HCT116 (cell line): ENCODE measurements at regions of chr13 and their contacts with region 1.

Region 1: DNA sequence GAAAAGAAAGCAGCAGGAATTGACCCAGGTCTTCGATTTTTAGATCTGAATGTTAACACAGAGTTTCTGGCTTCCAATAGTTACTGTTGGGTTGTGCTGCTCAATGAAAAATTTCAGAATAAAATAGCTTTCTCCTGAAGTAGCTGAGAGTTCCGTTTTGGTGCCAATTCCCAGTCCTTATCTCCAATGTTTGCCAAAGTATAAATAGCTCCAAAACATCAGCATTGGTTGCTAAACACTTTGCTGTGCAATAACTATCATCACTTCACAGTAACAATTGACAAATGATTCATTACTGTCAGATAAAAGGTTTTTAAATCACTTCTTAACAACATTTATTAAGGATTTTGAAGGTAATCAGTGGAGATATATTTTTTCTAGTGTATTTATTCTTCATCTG is 446.0 kb downstream of the PCDH20 start:
- DNase-seq: no peak
- ATAC-seq: no peak
- H3K4me3 ChIP-seq: no peak overlapping the region
- H3K27ac ChIP-seq: no peak overlapping the region
- H3K4me1 ChIP-seq: no peaks in the 10 kb centered on the region
- H3K27me3 ChIP-seq: no peaks in the 10 kb centered on the region
- CTCF ChIP-seq: no peak
- POLR2A ChIP-seq: no peak
- RAD21 ChIP-seq: no peak

Region 2: GRCh38 chr13:61045251-61045650 is 75.6 kb after region 1 on chr13:
- CTCF ChIA-PET with region 1: no interaction called
- POLR2A ChIA-PET with region 1: no interaction called
- RAD21 ChIA-PET with region 1: no interaction called
- intact Hi-C with region 1: no loop called
- DNase-seq: no peak
- ATAC-seq: no peak
- H3K4me3 ChIP-seq: no peak overlapping the region
- H3K27ac ChIP-seq: no peak overlapping the region
- H3K4me1 ChIP-seq: no peaks in the 10 kb centered on the region
- H3K27me3 ChIP-seq: no peaks in the 10 kb centered on the region
- CTCF ChIP-seq: no peak
- POLR2A ChIP-seq: no peak
- RAD21 ChIP-seq: no peak

Region 3: DNA sequence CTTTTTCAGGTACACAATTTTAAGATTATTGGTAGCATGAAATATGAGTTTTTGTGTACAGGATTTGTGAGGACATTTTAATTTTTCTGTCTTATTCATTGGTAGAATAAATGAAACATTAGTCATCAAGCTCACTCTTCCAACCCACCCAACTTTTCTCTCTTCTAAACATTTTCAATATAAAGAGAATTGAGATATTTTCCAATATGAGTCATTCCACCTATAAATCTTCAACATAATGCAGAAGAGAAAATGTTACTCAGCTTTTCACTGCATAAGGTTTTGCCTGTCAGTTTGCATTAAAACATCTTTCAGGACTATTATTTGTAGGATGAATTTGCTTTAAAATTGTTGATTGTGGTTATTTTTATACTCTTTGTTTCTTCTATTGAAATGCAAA is 115.3 kb after region 1 on chr13:
- CTCF ChIA-PET with region 1: no interaction called
- POLR2A ChIA-PET with region 1: no interaction called
- RAD21 ChIA-PET with region 1: no interaction called
- intact Hi-C with region 1: no loop called
- DNase-seq: no peak
- ATAC-seq: no peak
- H3K4me3 ChIP-seq: no peak overlapping the region
- H3K27ac ChIP-seq: no peak overlapping the region
- H3K4me1 ChIP-seq: no peaks in the 10 kb centered on the region
- H3K27me3 ChIP-seq: no peaks in the 10 kb centered on the region
- CTCF ChIP-seq: no peak
- POLR2A ChIP-seq: no peak
- RAD21 ChIP-seq: no peak

Region 4: GRCh38 chr13:61410669-61411297 is 441.1 kb after region 1 on chr13:
- CTCF ChIA-PET with region 1: no interaction called
- POLR2A ChIA-PET with region 1: no interaction called
- RAD21 ChIA-PET with region 1: no interaction called
- intact Hi-C with region 1: loop called (anchors 10 kb)
- DNase-seq: peak; percentile 2
- ATAC-seq: no peak
- H3K4me3 ChIP-seq: no peak overlapping the region
- H3K27ac ChIP-seq: no peak overlapping the region
- H3K4me1 ChIP-seq: no peaks in the 10 kb centered on the region
- H3K27me3 ChIP-seq: no peaks in the 10 kb centered on the region
- CTCF ChIP-seq: peak; percentile 37 to 44 (median 41); a peak in 4 of 6 replicates
- POLR2A ChIP-seq: no peak
- RAD21 ChIP-seq: peak; percentile 42; the same call in 1 of the 2 replicates